Activated CD4-positive, alpha-beta T cell treated with anti-CD3 and anti-CD28 coated beads for 36 hours (primary cell): ENCODE measurements at regions of chr10 and their contacts with region 1.

Region 1: DNA sequence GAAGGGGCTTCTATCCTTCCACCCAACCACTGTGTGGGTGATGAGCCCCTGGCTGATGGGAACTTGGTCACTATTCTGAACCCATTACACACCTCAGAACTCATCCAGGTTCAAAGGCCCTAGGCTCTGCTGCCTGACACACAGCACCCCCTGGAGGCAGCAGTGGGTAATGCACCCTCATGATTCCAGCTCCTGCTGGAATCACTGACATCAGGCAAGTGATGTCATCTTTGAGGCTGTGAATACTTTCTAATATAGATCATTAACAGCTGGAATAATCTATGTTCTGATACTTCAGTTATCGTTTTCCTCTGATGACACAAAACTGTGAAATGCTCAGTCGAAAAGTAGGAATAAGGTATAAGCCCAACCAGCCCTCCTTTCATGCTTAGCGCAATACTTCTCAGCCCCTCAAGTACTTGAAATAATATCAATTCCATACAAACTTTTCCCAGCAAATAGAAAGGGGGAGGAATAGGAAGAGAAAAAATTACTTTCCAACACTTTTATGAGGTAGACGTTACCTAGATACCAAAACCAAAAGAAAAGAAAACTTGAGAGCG is 7.5 kb upstream of the RBP3 start:
- DNase-seq: peak; percentile 84
- ATAC-seq: peak; percentile 55
- H3K4me3 Mint-ChIP-seq: no peak overlapping the region
- H3K27ac Mint-ChIP-seq: no peak overlapping the region
- H3K4me1 Mint-ChIP-seq: no peaks in the 10 kb centered on the region
- H3K27me3 Mint-ChIP-seq: peaks cover 4% of the 10 kb centered on the region

Region 2: DNA sequence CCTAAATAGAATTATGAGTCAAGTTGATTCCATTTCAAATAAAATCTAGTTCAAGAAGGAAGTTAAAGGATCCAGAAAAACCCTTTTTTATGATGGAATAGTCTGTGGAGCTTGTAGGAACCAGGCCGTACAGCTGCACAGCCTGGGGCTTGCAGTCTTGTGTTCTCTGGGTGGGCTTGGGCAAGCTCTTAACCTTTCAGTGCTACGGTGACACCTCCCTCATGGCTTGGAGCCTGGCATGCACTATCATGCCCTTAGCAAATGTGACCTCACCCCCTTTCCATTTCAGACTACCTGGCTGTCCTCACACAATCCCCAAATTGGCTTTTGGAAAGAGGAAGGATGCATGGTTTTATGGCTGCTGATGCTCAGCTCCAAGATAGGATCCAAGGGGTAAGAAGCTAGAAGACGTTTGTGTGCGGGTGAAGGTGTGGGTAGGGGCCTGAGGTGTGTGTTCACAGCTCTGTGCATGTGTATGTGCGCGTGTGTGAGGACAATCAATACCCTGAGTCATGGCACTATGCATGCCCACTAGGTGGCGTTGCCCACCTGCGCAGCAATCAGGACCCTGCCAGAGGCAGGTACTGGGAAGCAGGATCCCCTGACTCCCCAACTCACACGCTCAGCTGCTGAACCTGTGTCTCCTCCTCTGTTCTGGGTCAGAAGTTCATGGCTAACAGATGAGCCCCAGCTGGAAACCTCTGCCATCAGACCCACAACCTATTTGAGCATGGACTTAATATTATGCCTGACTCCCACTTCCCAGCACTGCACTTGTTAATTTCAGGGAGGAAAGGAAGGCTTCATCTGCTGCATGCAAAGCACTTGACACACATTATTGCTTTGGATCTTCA is 316.1 kb before region 1 on chr10:
- CTCF ChIA-PET with region 1: interaction called, 12 read pairs
- POLR2A ChIA-PET with region 1: no interaction called
- intact Hi-C with region 1: loop called (anchors 1 kb)
- DNase-seq: peak; percentile 84
- ATAC-seq: peak; percentile 97
- H3K4me3 Mint-ChIP-seq: no peak overlapping the region
- H3K27ac Mint-ChIP-seq: no peak overlapping the region
- H3K4me1 Mint-ChIP-seq: peaks cover 5% of the 10 kb centered on the region
- H3K27me3 Mint-ChIP-seq: peaks cover 6% of the 10 kb centered on the region

Region 3: DNA sequence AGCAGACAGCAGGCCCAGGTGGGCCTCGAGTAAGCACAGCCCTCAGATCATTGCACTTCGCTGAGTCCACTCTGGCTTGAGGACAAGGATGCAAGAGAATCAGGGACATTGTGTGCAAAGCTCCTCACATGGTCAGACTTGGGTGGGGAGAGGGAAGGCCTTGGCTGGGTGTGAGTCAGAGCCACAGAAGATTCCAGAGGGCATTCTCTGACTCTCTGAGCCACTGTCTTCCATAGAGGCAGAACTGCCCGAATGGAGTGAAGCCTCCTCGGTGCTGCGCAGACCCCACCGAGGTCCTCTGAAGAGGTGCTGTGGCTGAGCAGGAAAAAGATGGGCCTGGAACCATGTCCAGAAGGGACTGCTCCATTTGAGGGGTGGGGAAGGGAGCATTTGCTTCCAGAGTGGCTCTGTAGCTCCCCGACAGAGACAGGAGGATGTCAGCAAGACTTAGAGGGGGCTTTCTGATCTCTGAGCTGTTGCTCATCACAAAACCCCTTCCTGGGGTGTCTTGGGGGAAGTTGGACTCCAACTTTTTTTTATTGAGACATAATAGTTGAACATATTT is 308.7 kb before region 1 on chr10:
- CTCF ChIA-PET with region 1: interaction called, 4 read pairs
- POLR2A ChIA-PET with region 1: no interaction called
- intact Hi-C with region 1: loop called in 1 of 2 experiments (anchors 1 kb)
- DNase-seq: no peak
- ATAC-seq: no peak
- H3K4me3 Mint-ChIP-seq: no peak overlapping the region
- H3K27ac Mint-ChIP-seq: no peak overlapping the region
- H3K4me1 Mint-ChIP-seq: no peaks in the 10 kb centered on the region
- H3K27me3 Mint-ChIP-seq: no peaks in the 10 kb centered on the region

Region 4: GRCh38 chr10:47092822-47093221 is 247.9 kb before region 1 on chr10:
- CTCF ChIA-PET with region 1: no interaction called
- POLR2A ChIA-PET with region 1: no interaction called
- intact Hi-C with region 1: no loop called
- DNase-seq: no peak
- ATAC-seq: no peak
- H3K4me3 Mint-ChIP-seq: no peak overlapping the region
- H3K27ac Mint-ChIP-seq: no peak overlapping the region
- H3K4me1 Mint-ChIP-seq: peaks cover 4% of the 10 kb centered on the region
- H3K27me3 Mint-ChIP-seq: no peaks in the 10 kb centered on the region

Region 5: GRCh38 chr10:47300429-47300931 is 40.2 kb before region 1 on chr10:
- CTCF ChIA-PET with region 1: no interaction called
- POLR2A ChIA-PET with region 1: no interaction called
- intact Hi-C with region 1: no loop called
- DNase-seq: no peak
- ATAC-seq: peak; percentile 10
- H3K4me3 Mint-ChIP-seq: peak overlapping the region; percentile 60
- H3K27ac Mint-ChIP-seq: no peak overlapping the region
- H3K4me1 Mint-ChIP-seq: peaks cover 13% of the 10 kb centered on the region
- H3K27me3 Mint-ChIP-seq: peaks cover 8% of the 10 kb centered on the region

Region 6: DNA sequence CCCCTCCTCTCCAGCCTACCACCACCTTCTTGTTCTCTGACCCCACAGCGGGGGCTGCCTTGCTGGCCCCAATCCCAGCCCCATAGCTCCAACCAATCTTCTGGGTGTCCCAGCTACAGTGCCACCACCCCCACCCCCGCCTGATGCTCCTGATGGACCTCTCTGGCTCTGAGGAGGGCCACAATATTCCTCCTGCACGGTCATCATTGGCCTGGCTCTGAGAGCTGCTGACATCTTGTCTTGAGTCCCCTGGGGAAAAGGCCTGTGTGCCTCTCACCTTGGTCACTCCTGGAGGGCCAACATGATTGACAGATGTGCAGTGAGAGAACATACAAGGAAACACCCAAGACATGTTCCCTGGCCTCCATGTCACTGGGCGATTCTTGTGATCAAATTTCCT is 10.8 kb before region 1 on chr10:
- CTCF ChIA-PET with region 1: no interaction called
- POLR2A ChIA-PET with region 1: no interaction called
- intact Hi-C with region 1: no loop called
- DNase-seq: no peak
- ATAC-seq: no peak
- H3K4me3 Mint-ChIP-seq: no peak overlapping the region
- H3K27ac Mint-ChIP-seq: no peak overlapping the region
- H3K4me1 Mint-ChIP-seq: no peaks in the 10 kb centered on the region
- H3K27me3 Mint-ChIP-seq: no peaks in the 10 kb centered on the region